ENCODE measurements at regions of chr1 and their contacts with region 1.

Region 1: DNA sequence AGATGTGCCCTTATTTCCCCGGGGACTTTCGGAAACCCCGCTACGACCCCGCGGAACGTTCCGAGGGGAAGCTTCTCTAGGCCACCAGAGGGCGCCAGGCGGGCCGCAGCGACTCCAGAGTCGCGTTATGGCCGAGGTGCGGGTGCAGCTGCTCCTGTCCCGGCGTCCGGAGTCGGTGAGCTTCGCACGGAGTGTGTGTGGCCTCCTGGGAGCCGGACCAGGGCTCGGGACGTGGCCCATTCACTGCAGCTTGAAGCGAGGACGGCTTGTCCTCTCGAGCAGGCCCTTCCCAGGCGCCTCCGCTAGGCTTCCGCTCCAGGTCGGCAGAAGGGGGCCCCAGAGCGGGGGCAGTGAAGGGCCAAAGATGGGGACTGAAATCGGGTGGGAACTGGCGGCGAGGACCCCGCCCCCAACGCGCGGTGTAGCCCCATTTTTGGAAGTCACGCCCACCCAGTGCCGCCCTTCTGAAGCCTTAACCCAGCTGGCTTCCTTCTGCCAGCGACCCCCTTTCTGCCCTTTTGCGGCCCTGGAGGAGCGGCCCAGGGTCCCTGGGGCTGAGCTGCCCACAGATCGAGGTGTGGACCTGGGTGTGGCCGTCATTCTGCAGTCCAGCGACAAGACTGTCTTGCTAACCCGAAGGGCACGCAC is at the start of gene NUDT17:
- DNase-seq: peak; percentile 71
- ATAC-seq: peak; percentile 69
- H3K4me3 Mint-ChIP-seq: no peak within 1 kb of the TSS
- H3K27ac Mint-ChIP-seq: no peak within 1 kb of the TSS
- H3K4me1 Mint-ChIP-seq: peaks cover 8% of the 10 kb centered on the region
- H3K27me3 Mint-ChIP-seq: no peaks in the 10 kb centered on the region
- CTCF ChIP-seq: peak; percentile 64
- total RNA-seq, gene NUDT17: 2.9 and 5.4 TPM in 2 replicates

Region 2: GRCh38 chr1:145695821-145696629 is 149.6 kb before region 1 on chr1:
- CTCF ChIA-PET with region 1: no interaction called
- POLR2A ChIA-PET with region 1: no interaction called
- intact Hi-C with region 1: no loop called
- DNase-seq: no peak
- ATAC-seq: no peak
- H3K4me3 Mint-ChIP-seq: no peak overlapping the region
- H3K27ac Mint-ChIP-seq: no peak overlapping the region
- H3K4me1 Mint-ChIP-seq: no peaks in the 10 kb centered on the region
- H3K27me3 Mint-ChIP-seq: no peaks in the 10 kb centered on the region
- CTCF ChIP-seq: no peak

Region 3: DNA sequence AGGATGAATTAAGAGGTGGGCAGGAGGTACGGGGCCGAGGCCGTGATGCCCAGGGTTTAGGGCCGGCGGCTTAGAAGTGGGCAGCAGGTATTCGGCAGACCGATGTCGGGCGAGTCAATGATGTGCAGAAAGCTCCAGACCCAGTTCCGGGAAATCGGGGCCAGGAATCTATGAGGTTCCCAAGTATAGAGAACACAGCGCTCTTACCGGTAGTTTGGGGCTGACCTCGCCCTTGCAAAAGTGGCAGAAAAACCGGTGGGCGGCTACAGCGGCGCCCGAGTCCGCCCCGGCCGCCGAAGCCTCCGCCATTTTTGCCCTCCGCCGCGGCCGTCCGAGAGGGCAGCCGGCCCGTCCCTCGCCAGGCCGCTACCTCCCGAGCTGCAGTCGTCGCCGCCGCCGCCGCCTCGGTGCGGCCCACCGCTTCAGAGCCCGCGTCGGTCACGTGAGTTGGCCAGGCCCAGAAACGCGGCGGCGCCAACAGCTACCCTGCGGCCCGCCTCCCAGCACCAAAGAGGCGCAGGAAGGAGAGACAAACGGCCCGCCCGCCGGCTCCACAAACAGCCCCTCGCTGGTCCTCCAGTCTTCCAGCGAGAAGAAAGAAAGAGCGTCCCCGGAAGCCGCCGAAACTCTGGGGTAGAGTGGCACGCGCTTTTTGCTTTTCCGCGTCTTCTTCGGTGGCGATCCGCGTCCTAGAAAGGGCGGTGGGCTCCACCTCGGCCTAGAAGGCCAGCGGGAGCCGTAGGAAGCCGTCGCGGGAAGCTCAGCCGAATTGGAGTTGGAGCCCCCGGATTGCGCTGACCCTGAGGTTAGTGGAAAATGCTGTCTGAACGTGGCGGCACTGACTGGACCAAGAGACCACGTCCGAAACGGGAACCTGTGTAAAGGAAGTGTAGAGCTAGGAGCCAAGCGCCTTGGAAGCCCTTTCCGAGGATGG is 21.8 kb before region 1 on chr1 and contains the starts of genes POLR3C and RNF115:
- CTCF ChIA-PET with region 1: interaction called, 18 read pairs
- POLR2A ChIA-PET with region 1: interaction called, 29 read pairs
- intact Hi-C with region 1: loop called (anchors 2 kb)
- DNase-seq: peak; percentile 80
- ATAC-seq: peak; percentile 95
- H3K4me3 Mint-ChIP-seq: peak within 1 kb of the TSS; percentile 97
- H3K27ac Mint-ChIP-seq: peak within 1 kb of the TSS; percentile 94
- H3K4me1 Mint-ChIP-seq: peaks cover 25% of the 10 kb centered on the region
- H3K27me3 Mint-ChIP-seq: no peaks in the 10 kb centered on the region
- CTCF ChIP-seq: no peak
- total RNA-seq, gene POLR3C: 43.7 and 51.2 TPM in 2 replicates
- total RNA-seq, gene RNF115: 15.3 and 19.7 TPM in 2 replicates

Region 4: DNA sequence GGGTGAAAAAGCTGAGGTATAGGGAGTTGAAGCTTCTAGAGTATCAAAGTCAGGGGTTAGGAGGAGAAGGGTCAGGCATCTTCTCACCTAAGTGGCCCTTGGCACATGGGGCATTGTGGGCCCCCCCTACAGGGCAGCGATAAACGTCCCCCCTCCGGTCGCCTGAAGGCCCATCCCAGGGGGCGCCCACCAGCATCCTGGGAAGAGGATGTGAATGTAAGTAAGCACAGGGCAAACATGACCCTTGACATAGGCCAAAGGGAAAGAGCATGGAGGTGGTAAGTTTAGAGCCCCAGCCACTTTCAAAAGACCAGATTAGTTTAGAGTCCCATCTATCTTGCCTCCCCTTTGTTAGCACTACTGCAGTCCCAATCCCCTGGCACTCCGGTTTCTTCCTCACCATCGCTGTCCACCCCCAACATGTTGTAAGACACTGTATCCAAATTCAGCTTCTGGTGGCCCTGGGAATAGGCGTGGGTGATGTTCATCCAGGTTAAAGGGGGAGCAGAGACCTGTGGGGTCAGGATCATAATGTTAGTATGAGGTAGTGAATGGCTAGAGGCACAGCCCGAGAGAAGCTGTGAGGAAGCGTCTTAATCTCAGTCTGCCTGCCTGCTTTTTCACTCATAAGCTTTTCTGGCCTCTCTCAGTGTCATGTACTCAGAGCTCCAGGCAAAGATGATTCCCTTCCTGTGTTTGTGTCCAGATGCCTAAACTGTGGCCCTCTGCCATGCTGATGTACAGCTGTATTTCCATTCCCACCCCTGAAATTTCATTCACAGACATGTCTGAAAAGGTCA is 61.5 kb after region 1 on chr1:
- CTCF ChIA-PET with region 1: interaction called, 54 read pairs
- POLR2A ChIA-PET with region 1: interaction called, 9 read pairs
- intact Hi-C with region 1: loop called (anchors 1 kb)
- DNase-seq: no peak
- ATAC-seq: no peak
- H3K4me3 Mint-ChIP-seq: no peak overlapping the region
- H3K27ac Mint-ChIP-seq: no peak overlapping the region
- H3K4me1 Mint-ChIP-seq: peaks cover 5% of the 10 kb centered on the region
- H3K27me3 Mint-ChIP-seq: no peaks in the 10 kb centered on the region
- CTCF ChIP-seq: no peak

Region 5: GRCh38 chr1:145927063-145927886 is 81.6 kb after region 1 on chr1 and contains the start of gene RBM8A:
- CTCF ChIA-PET with region 1: interaction called, 10 read pairs
- POLR2A ChIA-PET with region 1: interaction called, 21 read pairs
- intact Hi-C with region 1: no loop called
- DNase-seq: peak; percentile 77
- ATAC-seq: peak; percentile 97
- H3K4me3 Mint-ChIP-seq: no peak within 1 kb of the TSS
- H3K27ac Mint-ChIP-seq: peak within 1 kb of the TSS; percentile 74
- H3K4me1 Mint-ChIP-seq: peaks cover 15% of the 10 kb centered on the region
- H3K27me3 Mint-ChIP-seq: no peaks in the 10 kb centered on the region
- CTCF ChIP-seq: no peak
- total RNA-seq, gene RBM8A: 178 and 201 TPM in 2 replicates

Region 6: GRCh38 chr1:145963995-145964901 is 118.6 kb after region 1 on chr1 and contains the starts of genes ANKRD34A and POLR3GL:
- CTCF ChIA-PET with region 1: interaction called, 7 read pairs
- POLR2A ChIA-PET with region 1: interaction called, 17 read pairs
- intact Hi-C with region 1: no loop called
- DNase-seq: peak; percentile 78
- ATAC-seq: peak; percentile 88
- H3K4me3 Mint-ChIP-seq: peak within 1 kb of the TSS; percentile 97
- H3K27ac Mint-ChIP-seq: peak within 1 kb of the TSS; percentile 96
- H3K4me1 Mint-ChIP-seq: peaks cover 52% of the 10 kb centered on the region
- H3K27me3 Mint-ChIP-seq: no peaks in the 10 kb centered on the region
- CTCF ChIP-seq: no peak
- total RNA-seq, gene ANKRD34A: 1.4 and 2.4 TPM in 2 replicates
- total RNA-seq, gene POLR3GL: 22.7 and 23.7 TPM in 2 replicates

Region 7: GRCh38 chr1:146012737-146013403 is 167.2 kb after region 1 on chr1:
- CTCF ChIA-PET with region 1: interaction called, 16 read pairs
- POLR2A ChIA-PET with region 1: interaction called, 5 read pairs
- intact Hi-C with region 1: loop called (anchors 1 kb)
- DNase-seq: no peak
- ATAC-seq: peak; percentile 62
- H3K4me3 Mint-ChIP-seq: no peak overlapping the region
- H3K27ac Mint-ChIP-seq: no peak overlapping the region
- H3K4me1 Mint-ChIP-seq: peaks cover 4% of the 10 kb centered on the region
- H3K27me3 Mint-ChIP-seq: peaks cover 6% of the 10 kb centered on the region
- CTCF ChIP-seq: peak; percentile 79

Region 8: DNA sequence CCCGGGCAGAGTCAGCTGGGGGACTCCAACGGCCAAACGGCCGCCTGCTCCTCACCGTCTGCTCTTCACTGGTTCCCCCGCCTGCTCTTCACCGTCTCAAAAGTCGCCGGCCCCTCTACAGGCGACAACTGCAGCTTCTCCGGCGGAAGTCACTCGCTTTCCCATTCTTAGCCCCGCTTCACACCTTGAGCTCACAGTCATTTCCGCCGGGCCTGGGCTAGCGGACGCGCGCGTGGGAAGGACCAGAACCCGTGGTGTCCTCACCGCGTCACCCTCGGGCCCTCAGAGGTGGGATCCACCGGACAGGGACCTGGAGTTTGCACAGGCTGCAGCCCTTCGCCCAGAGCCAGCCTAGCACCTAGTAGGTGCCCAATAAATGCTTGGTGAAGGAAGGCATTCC is 203.8 kb after region 1 on chr1:
- CTCF ChIA-PET with region 1: no interaction called
- POLR2A ChIA-PET with region 1: interaction called, 13 read pairs
- intact Hi-C with region 1: no loop called
- DNase-seq: no peak
- ATAC-seq: no peak
- H3K4me3 Mint-ChIP-seq: no peak overlapping the region
- H3K27ac Mint-ChIP-seq: no peak overlapping the region
- H3K4me1 Mint-ChIP-seq: peaks cover 22% of the 10 kb centered on the region
- H3K27me3 Mint-ChIP-seq: no peaks in the 10 kb centered on the region
- CTCF ChIP-seq: no peak

Region 9: GRCh38 chr1:147515046-147515869 is 1669.6 kb after region 1 on chr1:
- CTCF ChIA-PET with region 1: no interaction called
- POLR2A ChIA-PET with region 1: no interaction called
- intact Hi-C with region 1: no loop called
- DNase-seq: no peak
- ATAC-seq: no peak
- H3K4me3 Mint-ChIP-seq: no peak overlapping the region
- H3K27ac Mint-ChIP-seq: no peak overlapping the region
- H3K4me1 Mint-ChIP-seq: no peaks in the 10 kb centered on the region
- H3K27me3 Mint-ChIP-seq: peaks cover 6% of the 10 kb centered on the region
- CTCF ChIP-seq: no peak